Endothelial cell of umbilical vein (primary cell): ENCODE measurements at regions of chr12 and their contacts with region 1.

Region 1: DNA sequence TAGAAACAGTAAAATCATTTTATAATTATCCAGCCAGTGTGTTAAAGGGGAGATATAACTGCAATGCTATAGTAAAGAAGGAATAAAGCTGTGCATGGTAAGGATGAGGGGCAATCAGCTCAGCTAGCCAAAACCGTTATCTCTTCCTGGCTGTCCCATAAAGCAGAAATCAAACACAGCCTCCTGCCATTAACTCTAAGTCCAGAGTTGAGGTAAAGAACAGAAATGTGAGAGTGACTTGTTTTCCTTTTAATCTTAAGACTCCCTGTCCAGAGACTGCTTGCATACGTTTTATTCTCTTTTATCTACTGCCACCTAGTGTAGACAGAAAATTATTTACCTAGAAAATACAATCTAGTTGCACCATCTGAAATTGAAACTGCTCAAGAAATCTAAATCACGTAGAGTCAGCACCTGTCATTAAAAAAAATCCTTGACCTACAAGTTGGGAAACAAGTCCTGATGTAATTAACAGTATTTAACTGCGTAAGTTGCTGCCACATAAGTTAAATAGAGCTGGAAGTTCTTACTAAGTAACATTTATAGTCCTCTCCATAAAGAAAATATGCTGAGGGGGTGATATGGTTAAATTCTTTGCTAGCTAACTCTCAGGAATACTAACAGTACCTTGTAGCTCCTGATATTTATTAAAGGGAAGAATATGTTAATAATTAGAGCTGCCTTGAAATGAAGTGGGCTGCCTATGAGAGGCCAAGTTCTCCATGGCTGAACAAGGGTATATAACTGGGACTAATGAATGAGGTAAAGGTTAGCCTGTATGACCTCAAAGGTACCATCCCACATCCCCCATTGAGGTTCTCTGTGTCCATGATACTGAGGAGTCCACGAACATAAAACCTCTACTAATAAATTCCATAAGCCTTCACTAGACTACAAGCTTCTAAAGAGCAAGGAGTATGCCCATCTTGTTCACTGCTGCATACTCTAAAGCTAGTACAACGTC is 62.7 kb downstream of the GALNT4 start:
- DNase-seq: peak; percentile 85
- H3K4me3 ChIP-seq: peak overlapping the region in 1 of 3 experiments; percentile 21
- H3K27ac ChIP-seq: peak overlapping the region; percentile 79
- H3K4me1 ChIP-seq: peaks cover 24% of the 10 kb centered on the region
- H3K27me3 ChIP-seq: no peaks in the 10 kb centered on the region
- CTCF ChIP-seq: peak in 1 of 2 donors; percentile 26
- POLR2A ChIP-seq: no peak

Region 2: GRCh38 chr12:88111074-88111652 is 1350.8 kb before region 1 on chr12:
- CTCF ChIA-PET with region 1: no interaction called
- POLR2A ChIA-PET with region 1: no interaction called
- dilution Hi-C with region 1: no loop called
- intact Hi-C with region 1: loop called (anchors 5 kb)
- DNase-seq: peak; percentile 67
- H3K4me3 ChIP-seq: peak overlapping the region in 1 of 3 experiments; percentile 61
- H3K27ac ChIP-seq: peak overlapping the region; percentile 20
- H3K4me1 ChIP-seq: peaks cover 5% of the 10 kb centered on the region
- H3K27me3 ChIP-seq: no peaks in the 10 kb centered on the region
- CTCF ChIP-seq: peak in 1 of 2 donors; percentile 2
- POLR2A ChIP-seq: no peak

Region 3: GRCh38 chr12:89040146-89040964 is 421.6 kb before region 1 on chr12:
- CTCF ChIA-PET with region 1: no interaction called
- POLR2A ChIA-PET with region 1: no interaction called
- dilution Hi-C with region 1: loop called (anchors 25 kb)
- intact Hi-C with region 1: no loop called
- DNase-seq: no peak
- H3K4me3 ChIP-seq: no peak overlapping the region
- H3K27ac ChIP-seq: no peak overlapping the region
- H3K4me1 ChIP-seq: no peaks in the 10 kb centered on the region
- H3K27me3 ChIP-seq: no peaks in the 10 kb centered on the region
- CTCF ChIP-seq: no peak
- POLR2A ChIP-seq: no peak

Region 4: DNA sequence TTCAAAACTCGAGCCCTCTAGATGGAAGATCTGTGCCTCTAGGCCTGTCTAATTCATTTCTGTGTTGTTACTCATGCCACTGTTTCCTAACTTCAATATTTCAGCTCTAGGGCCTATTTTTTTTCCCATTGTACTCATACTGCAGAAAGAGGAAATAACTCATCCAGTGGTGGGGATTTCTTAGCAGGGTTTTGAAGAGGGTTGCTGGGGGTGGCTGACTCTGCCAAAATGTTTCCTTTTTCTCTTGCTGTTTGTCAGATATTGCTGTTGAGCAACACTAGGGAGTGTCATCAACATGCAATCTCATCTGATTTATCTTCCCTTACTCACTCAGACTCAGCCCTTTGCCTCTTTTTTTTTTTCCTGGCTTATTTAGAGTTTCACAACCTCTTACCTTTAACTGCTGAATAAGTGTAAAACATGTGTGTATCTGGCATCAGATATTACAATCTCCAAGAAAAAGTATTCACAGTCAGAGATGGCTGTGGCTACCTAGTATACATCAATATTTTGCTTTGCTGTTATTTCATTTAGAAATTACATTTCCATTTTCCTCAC is 299.1 kb before region 1 on chr12:
- CTCF ChIA-PET with region 1: no interaction called
- POLR2A ChIA-PET with region 1: no interaction called
- dilution Hi-C with region 1: no loop called
- intact Hi-C with region 1: loop called (anchors 2 kb)
- DNase-seq: peak; percentile 96
- H3K4me3 ChIP-seq: no peak overlapping the region
- H3K27ac ChIP-seq: peak overlapping the region; percentile 97
- H3K4me1 ChIP-seq: peaks cover 61% of the 10 kb centered on the region
- H3K27me3 ChIP-seq: no peaks in the 10 kb centered on the region
- CTCF ChIP-seq: no peak
- POLR2A ChIP-seq: peak; percentile 25

Region 5: GRCh38 chr12:89345830-89346740 is 115.8 kb before region 1 on chr12:
- CTCF ChIA-PET with region 1: interaction called, 163 read pairs
- POLR2A ChIA-PET with region 1: interaction called, 11 read pairs
- dilution Hi-C with region 1: loop called (anchors 25 kb)
- intact Hi-C with region 1: loop called (anchors 1 kb)
- DNase-seq: peak; percentile 99
- H3K4me3 ChIP-seq: peak overlapping the region in 1 of 3 experiments; percentile 90
- H3K27ac ChIP-seq: peak overlapping the region; percentile 60
- H3K4me1 ChIP-seq: peaks cover 48% of the 10 kb centered on the region
- H3K27me3 ChIP-seq: no peaks in the 10 kb centered on the region
- CTCF ChIP-seq: no peak
- POLR2A ChIP-seq: no peak

Region 6: GRCh38 chr12:89439941-89440340 is 22.0 kb before region 1 on chr12:
- CTCF ChIA-PET with region 1: interaction called, 10 read pairs
- POLR2A ChIA-PET with region 1: interaction called, 7 read pairs
- dilution Hi-C with region 1: no loop called
- intact Hi-C with region 1: no loop called
- DNase-seq: peak; percentile 45
- H3K4me3 ChIP-seq: no peak overlapping the region
- H3K27ac ChIP-seq: peak overlapping the region; percentile 44
- H3K4me1 ChIP-seq: peaks cover 7% of the 10 kb centered on the region
- H3K27me3 ChIP-seq: no peaks in the 10 kb centered on the region
- CTCF ChIP-seq: no peak
- POLR2A ChIP-seq: no peak

Region 7: GRCh38 chr12:89524541-89525285 is 62.8 kb after region 1 on chr12 and contains the start of gene GALNT4:
- CTCF ChIA-PET with region 1: interaction called, 14 read pairs
- POLR2A ChIA-PET with region 1: interaction called, 3 read pairs
- dilution Hi-C with region 1: no loop called
- intact Hi-C with region 1: no loop called
- DNase-seq: peak; percentile 92
- H3K4me3 ChIP-seq: peak within 1 kb of the TSS; percentile 16 to 92 (median 59)
- H3K27ac ChIP-seq: peak within 1 kb of the TSS; percentile 35
- H3K4me1 ChIP-seq: peaks cover 32% of the 10 kb centered on the region
- H3K27me3 ChIP-seq: no peaks in the 10 kb centered on the region
- CTCF ChIP-seq: peak; percentile 40 to 82
- POLR2A ChIP-seq: peak; percentile 25
- total RNA-seq, gene GALNT4: 9.8 and 10.9 TPM in 2 replicates

Region 8: DNA sequence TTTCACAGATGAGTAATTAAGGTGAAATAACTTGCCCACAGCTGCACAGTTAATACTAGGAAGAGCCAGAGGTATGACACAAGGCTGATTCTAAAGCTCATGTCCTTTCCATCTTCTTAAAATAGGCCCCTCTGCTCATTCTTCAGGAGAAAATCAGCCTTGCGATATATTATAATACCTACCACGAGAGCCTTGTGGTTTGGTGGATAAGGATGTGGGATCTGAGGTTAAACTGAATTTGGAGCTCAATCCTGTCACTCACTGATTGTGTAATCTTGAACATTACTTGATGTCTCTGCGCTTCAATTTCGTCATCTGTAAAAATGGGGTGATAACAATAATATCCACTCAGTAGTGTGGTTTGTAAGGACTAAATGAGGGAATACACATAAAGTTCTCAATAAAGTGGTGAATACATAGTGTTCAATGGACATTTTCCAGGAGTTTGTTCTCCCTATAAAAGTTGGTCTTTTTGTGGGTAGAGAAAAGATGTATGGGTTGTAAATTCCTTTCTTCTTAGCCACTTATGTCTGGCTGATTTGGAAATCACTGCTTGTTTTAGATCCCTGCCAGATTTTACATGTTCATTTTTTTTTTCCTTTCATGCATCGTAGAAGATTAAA is 271.8 kb after region 1 on chr12:
- CTCF ChIA-PET with region 1: no interaction called
- POLR2A ChIA-PET with region 1: no interaction called
- dilution Hi-C with region 1: no loop called
- intact Hi-C with region 1: no loop called
- DNase-seq: no peak
- H3K4me3 ChIP-seq: no peak overlapping the region
- H3K27ac ChIP-seq: no peak overlapping the region
- H3K4me1 ChIP-seq: no peaks in the 10 kb centered on the region
- H3K27me3 ChIP-seq: no peaks in the 10 kb centered on the region
- CTCF ChIP-seq: no peak
- POLR2A ChIP-seq: no peak